ENCODE measurements at regions of chr16 and their contacts with region 1.

Region 1: DNA sequence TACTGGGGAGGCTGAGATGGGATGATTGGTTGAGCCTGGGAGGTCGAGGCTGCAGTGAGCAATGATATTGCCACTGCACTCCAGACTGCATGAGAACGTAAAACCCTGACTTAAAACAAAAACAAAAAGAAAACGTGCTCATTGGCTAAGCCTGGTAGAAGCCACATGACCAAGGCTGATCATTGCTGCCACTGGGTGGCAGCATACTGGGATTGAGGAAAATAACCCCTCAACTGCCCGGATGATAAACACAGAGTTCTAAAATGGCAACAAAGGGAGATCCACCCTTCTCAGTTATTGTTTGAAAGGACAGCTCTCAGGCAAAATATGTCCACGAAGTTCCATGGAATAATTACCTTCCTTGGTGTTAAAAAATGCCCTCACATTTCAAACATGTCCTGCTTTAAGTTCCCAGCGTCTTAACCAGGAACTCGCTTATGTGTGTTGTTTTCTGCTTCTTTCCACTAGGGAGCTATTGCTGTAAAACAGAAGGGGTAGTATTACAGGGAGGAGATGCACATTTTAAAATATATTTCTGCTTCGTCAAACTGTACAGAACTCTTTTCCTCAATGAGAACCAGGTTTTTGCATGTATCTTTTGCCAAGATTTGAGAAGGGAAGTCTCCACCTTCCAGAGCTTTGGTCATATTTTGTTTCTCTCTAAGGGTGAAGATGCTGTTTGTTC is 675.3 kb downstream of the MAF start:
- DNase-seq: peak; percentile 38 to 42
- H3K4me3 ChIP-seq: no peak overlapping the region
- H3K4me3 Mint-ChIP-seq: no peak overlapping the region
- H3K27ac Mint-ChIP-seq: no peak overlapping the region
- H3K4me1 ChIP-seq: no peaks in the 10 kb centered on the region
- H3K4me1 Mint-ChIP-seq: no peaks in the 10 kb centered on the region
- H3K27me3 ChIP-seq: no peaks in the 10 kb centered on the region
- H3K27me3 Mint-ChIP-seq: no peaks in the 10 kb centered on the region
- CTCF ChIP-seq: peak; percentile 64 to 71

Region 2: GRCh38 chr16:79601931-79602627 is 676.9 kb after region 1 on chr16:
- CTCF ChIA-PET with region 1: interaction called, 7 read pairs
- POLR2A ChIA-PET with region 1: no interaction called
- intact Hi-C with region 1: loop called (anchors 1 kb)
- DNase-seq: peak; percentile 77 to 83
- H3K4me3 ChIP-seq: peak overlapping the region; percentile 56
- H3K4me3 Mint-ChIP-seq: peak overlapping the region; percentile 96
- H3K27ac Mint-ChIP-seq: no peak overlapping the region
- H3K4me1 ChIP-seq: peaks cover 9% of the 10 kb centered on the region
- H3K4me1 Mint-ChIP-seq: peaks cover 6% of the 10 kb centered on the region
- H3K27me3 ChIP-seq: peaks cover 6% of the 10 kb centered on the region
- H3K27me3 Mint-ChIP-seq: peaks cover 25% of the 10 kb centered on the region
- CTCF ChIP-seq: peak; percentile 84 to 93

Measured in Caco-2 (cell line).